Activated T-helper 1 cell treated with anti-CD3 and anti-CD28 coated beads, Interleukin-12 subunit alpha, Interleukin-12 subunit beta, Interleukin-2, Interleukin-4 antibody, amounts not matched to agents 30 ng/mL and 10 ng/mL and 1 ng/mL, durations not matched to agents 14 hours and 24 hours and 36 hours (primary cell): ENCODE measurements at regions of chr11 and their contacts with region 1.

Region 1: GRCh38 chr11:61332797-61333549 is at the starts of genes DDB1 and TKFC:
- DNase-seq: peak; percentile 98
- H3K4me3 Mint-ChIP-seq: peak within 1 kb of the TSS; percentile 93
- H3K27ac Mint-ChIP-seq: peak within 1 kb of the TSS; percentile 97
- H3K4me1 Mint-ChIP-seq: peaks cover 58% of the 10 kb centered on the region
- H3K27me3 Mint-ChIP-seq: no peaks in the 10 kb centered on the region
- total RNA-seq, gene DDB1: 259 and 270 TPM in 2 replicates
- total RNA-seq, gene TKFC: 71.2 and 78.2 TPM in 2 replicates

Region 2: GRCh38 chr11:60906132-60906972 is 426.6 kb before region 1 on chr11 and contains the start of gene PRPF19:
- intact Hi-C with region 1: loop called (anchors 2 kb)
- DNase-seq: peak; percentile 99
- H3K4me3 Mint-ChIP-seq: peak within 1 kb of the TSS; percentile 90
- H3K27ac Mint-ChIP-seq: peak within 1 kb of the TSS; percentile 90
- H3K4me1 Mint-ChIP-seq: peaks cover 38% of the 10 kb centered on the region
- H3K27me3 Mint-ChIP-seq: peaks cover 15% of the 10 kb centered on the region
- total RNA-seq, gene PRPF19: 221 and 222 TPM in 2 replicates

Region 3: GRCh38 chr11:61294717-61295595 is 38.0 kb before region 1 on chr11 and contains the start of gene VWCE:
- intact Hi-C with region 1: loop called (anchors 2 kb)
- DNase-seq: peak; percentile 64
- H3K4me3 Mint-ChIP-seq: peak within 1 kb of the TSS; percentile 83
- H3K27ac Mint-ChIP-seq: peak within 1 kb of the TSS; percentile 79
- H3K4me1 Mint-ChIP-seq: peaks cover 28% of the 10 kb centered on the region
- H3K27me3 Mint-ChIP-seq: peaks cover 16% of the 10 kb centered on the region
- total RNA-seq, gene VWCE: 9.4 and 10.9 TPM in 2 replicates

Region 4: DNA sequence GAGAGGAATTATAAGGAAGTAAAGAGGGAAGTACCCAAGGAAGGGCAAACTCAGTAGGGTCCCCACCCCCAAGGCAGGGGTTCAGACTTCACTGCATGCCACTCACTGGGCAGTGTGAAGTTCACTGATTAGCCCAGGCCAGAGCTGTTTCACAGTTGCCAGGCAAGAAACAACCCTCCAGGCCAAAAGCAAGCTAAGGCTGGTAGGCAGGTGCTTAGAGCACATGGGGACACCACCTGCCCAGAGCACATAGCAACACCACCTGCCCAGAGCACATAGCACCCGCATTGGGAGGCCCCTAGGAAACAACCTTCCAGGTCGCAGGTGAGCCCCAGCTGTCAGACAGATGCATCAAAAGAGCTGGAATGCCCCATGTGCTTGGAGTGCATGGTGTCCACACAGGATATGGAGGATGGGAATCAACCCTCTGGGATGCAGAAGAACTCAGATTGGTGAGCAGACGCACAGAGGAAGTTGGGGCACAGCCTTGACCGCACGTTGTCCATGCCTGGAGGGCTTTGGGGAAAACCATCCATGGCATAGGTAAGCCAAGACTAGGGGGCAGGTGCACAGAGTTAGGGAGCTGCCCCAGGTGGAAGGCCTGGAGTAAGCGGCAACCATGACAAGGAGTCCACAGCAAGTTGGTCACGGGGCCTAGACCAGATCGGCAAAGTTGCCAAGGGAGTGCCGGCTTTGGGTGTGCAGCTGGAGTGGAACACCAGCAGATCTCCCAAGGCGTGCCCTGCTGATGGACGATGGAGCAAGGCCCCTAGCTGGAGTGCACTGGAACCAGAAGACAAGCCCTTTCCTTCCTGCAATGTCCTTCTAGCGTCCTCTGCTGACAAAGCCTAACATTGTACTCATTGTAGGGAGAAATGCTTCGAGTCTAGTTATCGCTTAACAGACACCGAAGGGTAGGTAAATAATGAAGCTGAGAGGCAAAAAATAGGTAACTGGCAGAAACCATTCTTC is 51.6 kb after region 1 on chr11:
- intact Hi-C with region 1: loop called (anchors 1 kb)
- DNase-seq: no peak
- H3K4me3 Mint-ChIP-seq: no peak overlapping the region
- H3K27ac Mint-ChIP-seq: no peak overlapping the region
- H3K4me1 Mint-ChIP-seq: peaks cover 7% of the 10 kb centered on the region
- H3K27me3 Mint-ChIP-seq: no peaks in the 10 kb centered on the region

Region 5: GRCh38 chr11:61429691-61430582 is 97.0 kb after region 1 on chr11 and contains the starts of genes CPSF7 and SDHAF2:
- intact Hi-C with region 1: loop called (anchors 1 kb)
- DNase-seq: peak; percentile 98
- H3K4me3 Mint-ChIP-seq: peak within 1 kb of the TSS; percentile 91
- H3K27ac Mint-ChIP-seq: peak within 1 kb of the TSS; percentile 97
- H3K4me1 Mint-ChIP-seq: peaks cover 61% of the 10 kb centered on the region
- H3K27me3 Mint-ChIP-seq: no peaks in the 10 kb centered on the region
- total RNA-seq, gene CPSF7: 141 and 148 TPM in 2 replicates
- total RNA-seq, gene SDHAF2: 49.5 and 58.1 TPM in 2 replicates